GM10248 (cell line): ENCODE measurements at regions of chr5 and their contacts with region 1.

Region 1: DNA sequence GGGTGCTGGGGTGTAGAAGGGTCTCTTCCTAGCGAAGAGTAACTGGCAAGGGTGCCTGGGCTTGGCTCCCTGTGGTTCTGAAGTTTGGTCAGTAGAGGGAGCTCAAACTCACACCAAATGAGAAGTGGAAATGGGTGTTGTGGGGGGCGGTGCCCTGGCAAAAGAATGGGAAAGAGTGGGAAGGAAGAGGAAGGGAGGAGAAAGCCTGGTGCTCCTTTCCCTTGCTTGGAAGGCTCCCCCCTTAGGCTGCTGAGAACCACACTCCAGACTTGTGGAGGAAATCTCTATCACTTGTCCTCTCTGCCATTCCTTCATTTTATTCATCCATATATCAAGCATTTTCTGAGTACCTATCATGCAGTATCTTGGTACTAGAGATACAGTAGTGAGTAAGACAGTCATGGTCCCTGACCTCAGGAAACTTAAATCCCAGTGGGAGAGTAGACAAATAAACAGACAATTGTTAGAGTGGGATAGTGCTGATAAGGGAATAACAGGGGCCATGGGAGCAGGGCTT is 13.0 kb downstream of the SLC4A9 start:
- DNase-seq: peak; percentile 62
- CTCF ChIP-seq: peak; percentile 84

Region 2: DNA sequence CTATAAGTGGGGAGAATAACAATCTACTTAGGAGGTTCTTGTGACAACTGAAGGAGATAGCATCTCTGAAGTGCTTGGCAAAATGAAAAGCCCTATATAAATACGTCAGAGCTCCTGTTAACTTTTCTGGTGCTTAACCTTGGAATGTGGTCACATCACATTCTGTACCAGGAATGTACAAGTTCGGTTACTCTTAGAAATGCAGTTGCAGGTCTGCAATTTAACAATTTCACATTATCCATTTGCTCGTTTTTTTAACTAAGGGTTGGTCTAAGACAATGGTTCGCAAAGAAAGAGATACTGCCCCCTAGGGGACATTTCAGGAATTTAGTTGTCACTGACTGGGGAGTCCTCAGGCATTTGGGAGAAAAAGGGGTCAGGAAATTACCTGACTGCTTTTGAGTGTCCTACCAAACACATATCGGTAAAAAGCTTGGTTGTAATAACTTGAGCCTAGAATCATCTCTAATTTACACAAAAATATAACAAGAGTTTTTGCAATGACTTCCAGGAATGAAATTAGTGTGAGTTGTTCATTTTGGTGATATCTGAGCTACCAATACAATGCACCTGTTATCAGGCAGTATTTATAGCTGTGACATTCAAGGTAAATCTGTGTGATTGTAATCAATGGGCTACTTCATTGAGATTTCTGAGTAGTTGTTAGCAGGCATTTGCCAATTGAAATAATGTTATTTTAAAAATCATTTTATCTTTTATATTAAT is 21.3 kb before region 1 on chr5:
- CTCF ChIA-PET with region 1: interaction called, 205 read pairs
- POLR2A ChIA-PET with region 1: no interaction called
- DNase-seq: peak; percentile 70
- CTCF ChIP-seq: peak; percentile 80

Region 3: DNA sequence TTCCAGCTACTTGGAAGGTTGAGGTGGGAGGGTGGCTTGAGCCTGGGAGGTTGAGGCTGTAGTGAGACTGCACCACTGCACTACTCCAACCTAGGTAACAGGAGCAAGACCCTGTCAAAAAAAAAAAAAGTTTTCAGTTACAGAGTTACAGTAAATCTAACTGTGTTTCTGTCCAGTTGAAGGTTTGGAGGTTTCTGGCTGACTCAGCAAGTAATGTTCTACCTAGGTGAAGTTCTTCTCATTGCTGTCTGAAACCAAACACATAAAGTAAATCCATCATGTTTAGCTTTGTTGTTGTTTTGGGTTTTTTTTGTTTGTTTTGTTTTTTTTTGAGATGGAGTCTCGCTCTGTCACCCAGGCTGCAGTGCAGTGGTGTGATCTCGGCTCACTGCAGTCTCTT is 20.7 kb after region 1 on chr5:
- CTCF ChIA-PET with region 1: interaction called, 39 read pairs
- POLR2A ChIA-PET with region 1: no interaction called
- DNase-seq: no peak
- CTCF ChIP-seq: no peak

Region 4: DNA sequence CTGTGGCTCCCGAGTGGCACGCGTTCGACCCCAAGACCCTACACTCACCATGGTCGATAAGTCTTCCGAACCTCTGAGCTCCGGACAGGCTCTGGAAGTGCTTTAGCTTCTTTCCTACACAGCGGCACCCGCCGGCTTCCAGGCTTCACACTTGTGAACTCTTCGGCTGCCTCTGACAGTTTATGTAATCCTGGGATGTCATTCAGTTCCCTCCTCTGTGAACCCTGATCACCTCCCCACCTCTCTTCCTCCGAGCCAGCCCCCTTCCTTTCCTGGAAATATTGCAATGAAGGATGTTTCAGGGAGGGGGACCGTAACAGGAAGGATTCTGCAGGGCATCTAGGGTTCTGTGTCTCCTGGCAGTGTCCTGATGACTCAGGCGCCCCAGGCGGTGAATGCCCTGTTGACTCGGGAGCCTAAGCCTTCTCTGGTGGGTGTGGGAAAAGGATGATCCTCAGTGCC is 260.0 kb after region 1 on chr5 and contains the start of gene CD14:
- CTCF ChIA-PET with region 1: interaction called, 27 read pairs
- POLR2A ChIA-PET with region 1: no interaction called
- DNase-seq: no peak
- CTCF ChIP-seq: no peak